A673 (cell line): ENCODE measurements at regions of chr6 and their contacts with region 1.

Region 1: GRCh38 chr6:109382576-109383437 is 540 bp upstream of the CD164 start:
- DNase-seq: peak; percentile 97
- H3K4me3 ChIP-seq: peak overlapping the region; percentile 94
- H3K27ac ChIP-seq: peak overlapping the region; percentile 99
- H3K4me1 ChIP-seq: peaks cover 18% of the 10 kb centered on the region
- H3K27me3 ChIP-seq: no peaks in the 10 kb centered on the region
- CTCF ChIP-seq: peak; percentile 73

Region 2: GRCh38 chr6:108947114-108947854 is 435.5 kb before region 1 on chr6:
- CTCF ChIA-PET with region 1: no interaction called
- POLR2A ChIA-PET with region 1: no interaction called
- intact Hi-C with region 1: no loop called
- DNase-seq: no peak
- H3K4me3 ChIP-seq: no peak overlapping the region
- H3K27ac ChIP-seq: no peak overlapping the region
- H3K4me1 ChIP-seq: no peaks in the 10 kb centered on the region
- H3K27me3 ChIP-seq: no peaks in the 10 kb centered on the region
- CTCF ChIP-seq: no peak

Region 3: GRCh38 chr6:109094363-109095026 is 288.3 kb before region 1 on chr6 and contains the start of gene SESN1:
- CTCF ChIA-PET with region 1: interaction called, 5 read pairs
- POLR2A ChIA-PET with region 1: no interaction called
- intact Hi-C with region 1: loop called (anchors 5 kb)
- DNase-seq: peak; percentile 91
- H3K4me3 ChIP-seq: peak within 1 kb of the TSS; percentile 74
- H3K27ac ChIP-seq: peak within 1 kb of the TSS; percentile 93
- H3K4me1 ChIP-seq: peaks cover 15% of the 10 kb centered on the region
- H3K27me3 ChIP-seq: no peaks in the 10 kb centered on the region
- CTCF ChIP-seq: no peak
- total RNA-seq, gene SESN1: 3.4 and 4.1 TPM in 2 replicates

Region 4: GRCh38 chr6:109187399-109188114 is 195.2 kb before region 1 on chr6:
- CTCF ChIA-PET with region 1: interaction called, 17 read pairs
- POLR2A ChIA-PET with region 1: no interaction called
- intact Hi-C with region 1: loop called (anchors 1 kb)
- DNase-seq: peak; percentile 33
- H3K4me3 ChIP-seq: no peak overlapping the region
- H3K27ac ChIP-seq: no peak overlapping the region
- H3K4me1 ChIP-seq: no peaks in the 10 kb centered on the region
- H3K27me3 ChIP-seq: peaks cover 30% of the 10 kb centered on the region
- CTCF ChIP-seq: peak; percentile 93

Region 5: GRCh38 chr6:109440331-109441068 is 57.7 kb after region 1 on chr6 and contains the starts of genes PPIL6 and SMPD2:
- CTCF ChIA-PET with region 1: no interaction called
- POLR2A ChIA-PET with region 1: no interaction called
- intact Hi-C with region 1: loop called (anchors 2 kb)
- DNase-seq: peak; percentile 94
- H3K4me3 ChIP-seq: peak within 1 kb of the TSS; percentile 90
- H3K27ac ChIP-seq: peak within 1 kb of the TSS; percentile 87
- H3K4me1 ChIP-seq: no peaks in the 10 kb centered on the region
- H3K27me3 ChIP-seq: no peaks in the 10 kb centered on the region
- CTCF ChIP-seq: no peak
- total RNA-seq, gene PPIL6: 1.8 and 2.6 TPM in 2 replicates
- total RNA-seq, gene SMPD2: 8.6 and 11.6 TPM in 2 replicates

Region 6: GRCh38 chr6:109782491-109782999 is 399.7 kb after region 1 on chr6:
- CTCF ChIA-PET with region 1: no interaction called
- POLR2A ChIA-PET with region 1: no interaction called
- intact Hi-C with region 1: no loop called
- DNase-seq: no peak
- H3K4me3 ChIP-seq: no peak overlapping the region
- H3K27ac ChIP-seq: no peak overlapping the region
- H3K4me1 ChIP-seq: no peaks in the 10 kb centered on the region
- H3K27me3 ChIP-seq: no peaks in the 10 kb centered on the region
- CTCF ChIP-seq: no peak